PC-9 (cell line): ENCODE measurements at regions of chr4 and their contacts with region 1.

Region 1: DNA sequence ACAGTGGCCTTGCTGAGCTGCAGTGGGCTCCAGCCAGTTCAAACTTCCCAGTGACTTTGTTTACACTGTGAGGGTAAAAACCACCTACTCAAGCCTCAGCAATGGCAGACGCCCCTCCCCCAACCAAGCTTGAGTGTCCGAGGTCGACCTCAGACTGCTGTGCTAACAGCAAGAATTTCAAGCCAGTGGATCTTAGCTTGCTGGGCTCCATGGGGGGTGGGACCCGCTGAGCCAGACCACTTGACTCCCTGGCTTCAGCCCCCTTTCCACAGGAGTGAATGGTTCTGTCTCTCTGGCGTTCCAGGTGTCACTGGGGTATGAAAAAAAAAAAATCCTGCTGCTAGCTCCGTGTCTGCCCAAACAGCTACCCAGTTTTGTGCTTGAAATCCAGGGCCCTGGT is 168.9 kb upstream of the INTU start:
- DNase-seq: no peak
- H3K4me3 ChIP-seq: no peak overlapping the region
- H3K27ac ChIP-seq: no peak overlapping the region
- H3K4me1 ChIP-seq: no peaks in the 10 kb centered on the region
- H3K27me3 ChIP-seq: no peaks in the 10 kb centered on the region
- CTCF ChIP-seq: no peak

Region 2: GRCh38 chr4:127491571-127491970 is 27.7 kb after region 1 on chr4:
- CTCF ChIA-PET with region 1: interaction called, 10 read pairs
- POLR2A ChIA-PET with region 1: no interaction called
- intact Hi-C with region 1: no loop called
- DNase-seq: no peak
- H3K4me3 ChIP-seq: no peak overlapping the region
- H3K27ac ChIP-seq: no peak overlapping the region
- H3K4me1 ChIP-seq: no peaks in the 10 kb centered on the region
- H3K27me3 ChIP-seq: no peaks in the 10 kb centered on the region
- CTCF ChIP-seq: no peak

Region 3: GRCh38 chr4:127533028-127533700 is 69.3 kb after region 1 on chr4:
- CTCF ChIA-PET with region 1: no interaction called
- POLR2A ChIA-PET with region 1: no interaction called
- intact Hi-C with region 1: no loop called
- DNase-seq: no peak
- H3K4me3 ChIP-seq: no peak overlapping the region
- H3K27ac ChIP-seq: no peak overlapping the region
- H3K4me1 ChIP-seq: no peaks in the 10 kb centered on the region
- H3K27me3 ChIP-seq: no peaks in the 10 kb centered on the region
- CTCF ChIP-seq: no peak

Region 4: GRCh38 chr4:128484896-128485295 is 1021.0 kb after region 1 on chr4:
- CTCF ChIA-PET with region 1: no interaction called
- POLR2A ChIA-PET with region 1: no interaction called
- intact Hi-C with region 1: no loop called
- DNase-seq: no peak
- H3K4me3 ChIP-seq: no peak overlapping the region
- H3K27ac ChIP-seq: no peak overlapping the region
- H3K4me1 ChIP-seq: no peaks in the 10 kb centered on the region
- H3K27me3 ChIP-seq: no peaks in the 10 kb centered on the region
- CTCF ChIP-seq: no peak